Heart right ventricle (tissue), 16 donors: ENCODE measurements at regions of chr12 and their contacts with region 1.

Region 1: DNA sequence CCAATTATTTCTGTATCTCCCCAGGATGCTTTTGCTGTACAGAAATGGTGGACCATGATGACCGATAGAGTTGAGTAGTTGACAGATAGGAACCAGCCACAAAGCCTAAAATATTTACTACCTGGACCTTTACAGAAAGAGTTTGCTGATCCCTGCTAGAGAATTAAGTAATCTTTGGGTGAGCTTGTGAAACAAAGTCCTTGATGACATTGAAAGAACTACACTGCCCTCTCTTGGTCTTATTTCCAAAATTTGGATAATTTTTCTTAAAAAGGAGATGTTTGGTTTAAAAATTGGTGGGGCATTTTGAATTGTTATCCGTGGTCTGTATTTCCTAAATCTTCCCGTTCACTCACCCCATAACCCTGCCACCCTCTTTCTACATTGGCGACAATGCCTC is 13.7 kb upstream of the TCTN1 start:
- DNase-seq: no peak
- ATAC-seq: peak in 3 of 8 donors; percentile 51 to 56 (median 54)
- H3K4me3 ChIP-seq: no peak overlapping the region
- H3K27ac ChIP-seq: peak overlapping the region in 1 of 10 donors; percentile 59
- H3K4me1 ChIP-seq: peaks cover 0 to 26% (median 0%) of the 10 kb centered on the region in 9 donors
- H3K27me3 ChIP-seq: no peaks in the 10 kb centered on the region
- CTCF ChIP-seq: peak in 8 of 9 donors; percentile 6 to 59 (median 50)

Region 2: DNA sequence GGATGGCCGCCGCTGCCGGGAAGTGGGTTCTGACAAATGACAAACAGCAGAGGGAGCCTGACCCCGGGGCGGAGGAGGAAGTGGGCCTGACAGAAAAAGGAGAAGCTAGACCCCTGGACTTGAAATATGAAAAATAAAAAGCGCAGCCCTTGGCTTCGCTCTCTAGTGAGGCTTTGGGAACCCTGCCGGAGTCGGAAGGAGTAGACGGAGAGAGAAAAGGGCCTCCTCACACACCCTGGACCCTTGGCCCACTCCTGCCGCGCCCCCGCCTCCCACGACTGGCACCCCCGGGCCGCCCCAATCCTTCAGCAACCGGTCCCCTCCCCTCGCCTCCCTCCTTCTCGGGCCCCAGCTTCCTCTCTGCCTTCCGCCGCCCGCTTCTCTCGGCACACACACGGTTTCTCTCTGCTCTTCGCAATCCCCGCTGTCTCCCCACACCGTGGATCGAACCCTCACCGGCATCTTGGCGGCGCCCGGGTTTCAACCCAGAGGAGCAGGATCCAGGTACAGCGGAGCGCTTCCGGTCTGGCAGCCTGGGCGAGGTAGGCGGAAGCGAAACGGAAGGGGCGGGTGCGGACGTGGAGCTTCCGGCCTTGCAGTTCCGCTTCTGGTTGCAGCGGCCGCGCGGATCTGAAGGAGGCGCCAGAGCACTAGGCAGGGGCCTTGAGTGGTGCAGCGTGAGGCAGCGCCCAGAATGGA is 150.3 kb before region 1 on chr12 and contains the start of gene ARPC3:
- intact Hi-C with region 1: loop called in 8 of 10 experiments (anchors 2 to 5 kb)
- DNase-seq: peak; percentile 94 to 95
- ATAC-seq: peak; percentile 98 to 100 (median 99)
- H3K4me3 ChIP-seq: peak within 1 kb of the TSS; percentile 61 to 95 (median 81)
- H3K27ac ChIP-seq: peak within 1 kb of the TSS; percentile 80 to 99 (median 94)
- H3K4me1 ChIP-seq: peaks cover 0 to 49% (median 22%) of the 10 kb centered on the region in 9 donors
- H3K27me3 ChIP-seq: no peaks in the 10 kb centered on the region
- CTCF ChIP-seq: peak; percentile 69 to 97 (median 88)
- total RNA-seq, gene ARPC3: 71.9 to 168 (median 82.6) TPM

Region 3: DNA sequence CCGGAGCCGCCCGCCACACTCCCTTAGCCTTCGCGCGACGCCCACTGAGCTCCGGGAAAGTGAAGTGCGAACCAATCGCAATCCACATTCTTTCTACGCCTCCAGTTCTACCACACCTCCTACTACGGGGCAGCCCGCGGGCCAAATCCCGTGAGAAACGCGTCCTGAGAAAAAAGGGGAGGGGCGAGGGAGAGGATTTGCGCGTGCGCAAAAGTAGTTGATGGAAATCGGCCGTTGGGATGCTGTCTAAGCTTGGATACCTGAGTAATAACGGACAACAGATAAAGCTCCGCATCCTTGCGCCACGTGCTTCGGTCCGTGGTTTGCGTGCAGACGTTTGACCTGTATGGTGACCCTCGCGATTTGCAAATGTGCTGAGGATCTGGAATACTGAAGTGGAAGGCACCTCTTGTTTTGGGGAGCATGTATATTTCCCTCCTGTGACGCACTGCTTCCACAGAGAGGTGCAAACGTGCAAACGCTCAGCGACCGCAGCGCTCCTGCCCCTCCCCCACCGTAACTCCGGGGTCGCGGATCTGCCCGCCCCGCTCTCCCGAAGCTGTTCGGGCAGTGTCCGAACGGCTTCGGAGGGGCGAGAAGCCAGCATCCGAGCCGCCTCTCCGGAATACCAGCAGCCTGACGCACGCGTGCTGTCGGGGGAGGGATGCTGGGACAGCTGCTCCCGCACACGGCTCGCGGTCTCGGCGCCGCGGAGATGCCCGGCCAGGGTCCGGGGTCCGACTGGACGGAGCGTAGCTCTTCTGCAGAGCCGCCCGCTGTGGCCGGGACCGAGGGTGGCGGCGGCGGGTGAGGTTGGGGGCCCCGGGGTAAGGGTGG is 131.8 kb before region 1 on chr12 and contains the starts of genes FAM216A and GPN3:
- intact Hi-C with region 1: loop called in 1 of 10 experiments (anchors 5 kb)
- DNase-seq: peak; percentile 95 to 98
- ATAC-seq: peak; percentile 94 to 97 (median 96)
- H3K4me3 ChIP-seq: peak within 1 kb of the TSS; percentile 56 to 90 (median 77)
- H3K27ac ChIP-seq: peak within 1 kb of the TSS; percentile 62 to 96 (median 88)
- H3K4me1 ChIP-seq: peaks cover 7 to 28% (median 24%) of the 10 kb centered on the region in 9 donors
- H3K27me3 ChIP-seq: no peaks in the 10 kb centered on the region
- CTCF ChIP-seq: no peak
- total RNA-seq, gene FAM216A: 2.4 to 9.2 (median 5.4) TPM
- total RNA-seq, gene GPN3: 25.3 to 37.5 (median 31.1) TPM

Region 4: GRCh38 chr12:110508071-110508586 is 92.1 kb before region 1 on chr12:
- intact Hi-C with region 1: loop called (anchors 1 to 5 kb)
- DNase-seq: no peak
- ATAC-seq: no peak
- H3K4me3 ChIP-seq: no peak overlapping the region
- H3K27ac ChIP-seq: no peak overlapping the region
- H3K4me1 ChIP-seq: peaks cover 0 to 5% (median 0%) of the 10 kb centered on the region in 9 donors
- H3K27me3 ChIP-seq: no peaks in the 10 kb centered on the region
- CTCF ChIP-seq: no peak

Region 5: GRCh38 chr12:110513842-110514241 is 86.4 kb before region 1 on chr12:
- intact Hi-C with region 1: loop called (anchors 1 to 5 kb)
- DNase-seq: no peak
- ATAC-seq: no peak
- H3K4me3 ChIP-seq: no peak overlapping the region
- H3K27ac ChIP-seq: no peak overlapping the region
- H3K4me1 ChIP-seq: peaks cover 0 to 5% (median 0%) of the 10 kb centered on the region in 9 donors
- H3K27me3 ChIP-seq: no peaks in the 10 kb centered on the region
- CTCF ChIP-seq: no peak

Region 6: GRCh38 chr12:110549716-110550115 is 50.5 kb before region 1 on chr12:
- intact Hi-C with region 1: loop called in 2 of 10 experiments (anchors 5 kb)
- DNase-seq: no peak
- ATAC-seq: peak in 5 of 8 donors; percentile 20 to 60 (median 46)
- H3K4me3 ChIP-seq: no peak overlapping the region
- H3K27ac ChIP-seq: peak overlapping the region in 9 of 10 donors; percentile 26 to 75 (median 47)
- H3K4me1 ChIP-seq: peaks cover 0 to 74% (median 40%) of the 10 kb centered on the region in 9 donors
- H3K27me3 ChIP-seq: no peaks in the 10 kb centered on the region
- CTCF ChIP-seq: no peak

Region 7: DNA sequence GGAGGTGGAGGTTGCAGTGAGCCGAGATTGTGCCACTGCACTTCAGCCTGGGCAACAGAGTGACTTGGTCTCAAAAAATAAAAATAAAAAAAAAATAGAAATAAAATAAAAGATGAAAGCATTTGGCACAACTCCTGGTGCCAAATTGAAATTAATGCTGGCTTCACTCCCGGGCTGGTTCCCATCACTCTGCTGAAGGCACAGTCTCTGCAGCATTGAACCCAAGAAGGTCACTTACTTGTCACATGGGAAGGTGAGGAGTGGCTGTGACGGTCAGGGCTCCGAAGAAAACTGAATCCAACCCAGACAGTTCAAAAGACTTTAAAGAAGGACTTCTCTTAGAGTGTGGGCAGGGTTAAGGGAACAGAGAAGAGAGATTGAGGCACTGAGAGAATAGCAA is 236.0 kb after region 1 on chr12:
- intact Hi-C with region 1: loop called in 1 of 10 experiments (anchors 10 kb)
- DNase-seq: no peak
- ATAC-seq: peak in 1 of 8 donors; percentile 29
- H3K4me3 ChIP-seq: no peak overlapping the region
- H3K27ac ChIP-seq: no peak overlapping the region
- H3K4me1 ChIP-seq: no peaks in the 10 kb centered on the region
- H3K27me3 ChIP-seq: no peaks in the 10 kb centered on the region
- CTCF ChIP-seq: no peak